ENCODE measurements at regions of chr1 and their contacts with region 1.

Region 1: DNA sequence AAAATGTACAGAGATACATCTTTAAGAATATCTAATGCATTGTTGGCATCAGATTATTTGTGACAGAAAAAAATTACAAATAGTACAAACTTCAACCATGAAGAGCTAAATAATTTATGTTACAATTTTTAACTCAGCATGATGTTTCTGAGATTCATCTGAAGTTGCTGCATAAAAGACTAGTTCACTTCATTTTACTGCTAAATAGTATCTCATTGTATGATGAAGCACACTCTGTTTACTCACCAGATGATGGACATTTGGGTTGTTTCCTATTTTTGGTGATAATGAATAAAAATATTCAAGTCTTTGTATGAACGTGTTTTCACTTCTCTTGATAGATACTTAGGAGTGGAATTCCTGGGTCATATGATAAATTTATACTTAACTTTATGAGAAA is 20.6 kb downstream of the EGLN1 start:
- DNase-seq: no peak
- CTCF ChIP-seq: no peak

Region 2: DNA sequence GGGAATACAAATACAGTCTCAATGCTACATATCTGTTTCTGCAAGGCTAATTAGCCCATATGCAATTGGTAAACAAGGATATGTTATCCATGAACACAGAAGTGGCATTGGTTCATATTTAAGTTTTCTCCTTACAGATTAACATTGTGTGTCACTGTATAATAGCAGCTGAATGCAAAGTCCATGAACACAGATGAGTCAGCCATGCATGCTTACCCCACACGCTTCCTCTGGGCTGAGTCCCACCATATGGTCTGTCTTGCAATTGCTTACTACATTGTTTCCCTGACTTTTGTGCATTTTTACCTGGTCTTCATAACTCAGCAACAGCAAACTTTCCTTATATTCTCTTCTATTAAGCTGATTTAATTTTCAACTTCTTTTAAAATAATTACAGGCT is 85.5 kb after region 1 on chr1:
- CTCF ChIA-PET with region 1: no interaction called
- POLR2A ChIA-PET with region 1: no interaction called
- DNase-seq: no peak
- CTCF ChIP-seq: no peak

Region 3: DNA sequence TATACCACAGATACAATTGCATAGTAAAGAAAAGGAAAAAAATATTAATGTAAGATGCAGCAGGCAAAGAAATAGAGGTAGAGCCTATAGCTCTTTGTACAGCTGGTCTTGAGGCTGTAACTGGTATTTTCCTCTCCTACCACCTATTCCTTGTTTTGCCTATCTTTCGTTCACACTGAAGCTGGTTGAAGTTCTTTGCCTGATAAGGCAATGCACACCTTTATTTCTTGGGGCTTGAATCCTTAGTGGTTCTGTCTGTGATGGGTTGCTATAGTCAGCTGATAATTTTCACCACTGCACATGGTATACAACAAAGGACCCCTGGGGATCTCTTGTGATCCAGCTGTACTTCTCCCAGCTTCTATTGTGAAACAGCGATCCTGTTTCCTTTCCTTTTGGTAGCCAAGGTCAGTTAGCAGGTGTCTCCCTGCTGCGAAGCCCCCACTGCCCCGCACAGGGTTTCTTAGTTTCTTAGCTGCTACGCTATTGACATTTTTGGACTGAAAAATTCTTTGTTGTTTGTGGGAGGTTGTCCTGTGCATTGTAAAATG is 117.1 kb after region 1 on chr1:
- CTCF ChIA-PET with region 1: no interaction called
- POLR2A ChIA-PET with region 1: interaction called, 16 read pairs
- DNase-seq: no peak
- CTCF ChIP-seq: no peak

Region 4: DNA sequence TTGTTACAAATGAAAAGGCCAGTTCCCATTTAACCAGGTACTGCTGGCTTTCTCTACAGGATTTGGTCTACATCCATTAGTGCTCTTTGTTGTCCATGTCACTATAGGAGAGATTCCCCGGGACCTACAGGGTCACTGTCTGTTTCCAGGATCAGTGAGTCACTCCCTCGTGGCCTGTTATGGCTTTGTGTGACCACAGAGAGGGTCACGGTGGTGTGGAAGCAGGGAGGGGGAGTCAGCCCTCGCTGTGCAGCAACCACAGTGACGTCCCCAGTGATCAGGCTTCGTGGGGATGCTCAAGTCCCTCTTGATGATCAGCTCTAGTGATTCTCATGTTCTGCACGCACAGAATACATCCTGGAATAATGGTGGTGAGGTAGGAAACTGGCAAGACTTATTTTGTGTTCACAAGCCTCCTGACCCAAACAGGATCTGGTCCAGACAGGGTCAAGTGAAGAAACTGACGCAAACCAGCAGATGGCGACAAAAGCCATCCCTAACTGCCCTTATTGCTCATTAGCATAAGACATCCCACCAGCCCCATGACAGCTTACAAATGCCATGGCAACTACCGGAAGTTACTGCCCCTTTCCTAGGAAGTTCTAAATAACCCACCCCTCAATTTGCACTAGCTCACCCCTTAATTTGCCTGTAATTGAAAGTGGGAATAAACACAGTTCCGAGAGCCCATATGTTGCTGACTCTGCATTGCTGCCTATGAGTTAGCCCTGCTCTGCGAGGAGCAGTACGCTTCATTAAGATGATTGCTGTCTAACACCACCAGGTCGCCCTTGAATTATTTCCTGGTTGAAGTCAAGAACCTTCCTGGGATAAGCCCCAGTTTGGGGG is 323.6 kb after region 1 on chr1:
- CTCF ChIA-PET with region 1: no interaction called
- POLR2A ChIA-PET with region 1: no interaction called
- DNase-seq: peak; percentile 18
- CTCF ChIP-seq: peak; percentile 38